ENCODE measurements at regions of chr4 and their contacts with region 1.

Region 1: DNA sequence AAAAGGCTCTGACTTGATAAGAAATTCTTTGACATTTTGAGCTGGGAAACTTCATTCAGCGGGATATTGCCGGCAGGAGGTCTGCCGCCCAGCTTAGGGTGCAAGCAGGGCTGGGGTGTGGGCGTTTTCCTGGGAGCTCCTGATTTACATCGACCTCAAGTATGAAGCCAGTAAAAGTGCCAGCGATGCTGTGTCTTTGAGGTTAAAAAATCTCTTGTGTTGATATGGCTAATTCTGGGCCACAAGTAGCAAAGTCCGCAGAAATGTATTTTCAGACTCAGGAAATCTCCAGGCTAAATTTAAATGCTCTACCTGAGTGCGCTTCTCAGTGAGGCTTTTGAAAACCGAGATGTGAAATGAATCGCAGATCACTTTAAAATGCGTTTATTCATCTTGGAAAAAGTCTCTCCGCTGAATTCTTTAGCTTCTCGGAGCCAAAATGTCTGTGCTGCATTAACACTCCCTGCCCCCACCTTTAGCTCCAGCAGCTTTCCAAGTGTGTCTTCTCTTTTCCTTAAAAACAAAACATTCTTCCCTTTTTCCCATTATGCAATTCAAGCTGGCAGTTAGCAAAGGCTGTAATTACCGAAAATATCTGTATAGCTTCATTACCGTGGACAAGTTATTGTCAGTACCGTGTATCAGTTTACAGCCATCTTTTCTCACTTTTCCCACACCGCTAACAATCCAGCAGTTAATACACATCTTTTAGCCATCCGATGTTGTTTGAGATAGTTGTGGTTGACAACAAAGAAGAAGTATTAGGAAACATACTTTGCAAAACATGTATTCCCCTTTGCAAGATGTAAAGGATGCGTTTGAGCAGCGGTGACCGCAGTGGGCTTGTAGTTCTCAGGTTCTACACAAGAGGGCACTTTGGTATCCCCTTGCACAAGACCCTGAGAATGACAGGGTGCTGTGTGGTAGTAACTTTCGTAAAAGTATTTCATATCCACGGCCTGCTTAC is 136.0 kb upstream of the STX18 start:
- DNase-seq: peak in 1 of 5 donors; percentile 37
- H3K4me3 ChIP-seq: no peak overlapping the region
- H3K27ac ChIP-seq: no peak overlapping the region
- H3K4me1 ChIP-seq: peaks cover 3% of the 10 kb centered on the region
- H3K27me3 ChIP-seq: no peaks in the 10 kb centered on the region
- CTCF ChIP-seq: peak in 1 of 3 donors; percentile 37
- EP300 ChIP-seq: no peak
- POLR2A ChIP-seq: no peak

Region 2: GRCh38 chr4:2963175-2963965 is 1714.5 kb before region 1 on chr4 and contains the starts of genes GRK4 and NOP14:
- intact Hi-C with region 1: loop called in 1 of 4 experiments (anchors 5 kb)
- DNase-seq: peak; percentile 97 to 98 (median 98)
- H3K4me3 ChIP-seq: peak within 1 kb of the TSS; percentile 100
- H3K27ac ChIP-seq: peak within 1 kb of the TSS; percentile 4 to 68
- H3K4me1 ChIP-seq: peaks cover 13% of the 10 kb centered on the region
- H3K27me3 ChIP-seq: no peaks in the 10 kb centered on the region
- CTCF ChIP-seq: peak in 2 of 3 donors; percentile 46 to 48
- EP300 ChIP-seq: no peak
- POLR2A ChIP-seq: peak; percentile 43
- total RNA-seq, gene GRK4: 5.1 to 17.6 (median 6.9) TPM
- total RNA-seq, gene NOP14: 13.6 to 39.7 (median 28.3) TPM

Region 3: DNA sequence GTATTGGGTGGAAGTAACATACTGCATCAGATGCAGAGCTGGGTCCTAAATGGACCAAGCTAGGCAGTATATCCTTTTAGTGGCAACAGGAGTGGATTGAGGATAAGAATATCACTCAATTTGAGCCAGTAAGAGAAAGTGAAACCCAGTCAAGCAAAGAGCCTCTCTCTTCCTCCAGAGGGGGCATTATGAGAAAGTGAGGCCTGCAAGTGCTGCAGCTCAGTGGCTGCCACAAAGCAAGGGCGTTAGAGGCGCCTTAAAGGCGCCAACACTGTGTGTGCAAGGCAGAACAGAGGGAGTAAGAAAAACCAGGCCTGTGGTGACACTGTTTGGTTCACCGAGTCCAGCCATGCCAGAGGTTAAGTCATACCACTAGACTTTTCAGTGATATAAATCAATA is 153.5 kb before region 1 on chr4:
- intact Hi-C with region 1: no loop called
- DNase-seq: no peak
- H3K4me3 ChIP-seq: no peak overlapping the region
- H3K27ac ChIP-seq: no peak overlapping the region
- H3K4me1 ChIP-seq: peaks cover 5% of the 10 kb centered on the region
- H3K27me3 ChIP-seq: no peaks in the 10 kb centered on the region
- CTCF ChIP-seq: no peak
- EP300 ChIP-seq: no peak
- POLR2A ChIP-seq: no peak

Region 4: GRCh38 chr4:4614925-4615678 is 62.7 kb before region 1 on chr4:
- intact Hi-C with region 1: loop called in 1 of 4 experiments (anchors 10 kb)
- DNase-seq: no peak
- H3K4me3 ChIP-seq: no peak overlapping the region
- H3K27ac ChIP-seq: no peak overlapping the region
- H3K4me1 ChIP-seq: peaks cover 15% of the 10 kb centered on the region
- H3K27me3 ChIP-seq: no peaks in the 10 kb centered on the region
- CTCF ChIP-seq: no peak
- EP300 ChIP-seq: no peak
- POLR2A ChIP-seq: no peak

Measured in ovary (tissue), 10 donors.